Transverse colon (tissue), 4 donors: ENCODE measurements at regions of chr14 and their contacts with region 1.

Region 1: DNA sequence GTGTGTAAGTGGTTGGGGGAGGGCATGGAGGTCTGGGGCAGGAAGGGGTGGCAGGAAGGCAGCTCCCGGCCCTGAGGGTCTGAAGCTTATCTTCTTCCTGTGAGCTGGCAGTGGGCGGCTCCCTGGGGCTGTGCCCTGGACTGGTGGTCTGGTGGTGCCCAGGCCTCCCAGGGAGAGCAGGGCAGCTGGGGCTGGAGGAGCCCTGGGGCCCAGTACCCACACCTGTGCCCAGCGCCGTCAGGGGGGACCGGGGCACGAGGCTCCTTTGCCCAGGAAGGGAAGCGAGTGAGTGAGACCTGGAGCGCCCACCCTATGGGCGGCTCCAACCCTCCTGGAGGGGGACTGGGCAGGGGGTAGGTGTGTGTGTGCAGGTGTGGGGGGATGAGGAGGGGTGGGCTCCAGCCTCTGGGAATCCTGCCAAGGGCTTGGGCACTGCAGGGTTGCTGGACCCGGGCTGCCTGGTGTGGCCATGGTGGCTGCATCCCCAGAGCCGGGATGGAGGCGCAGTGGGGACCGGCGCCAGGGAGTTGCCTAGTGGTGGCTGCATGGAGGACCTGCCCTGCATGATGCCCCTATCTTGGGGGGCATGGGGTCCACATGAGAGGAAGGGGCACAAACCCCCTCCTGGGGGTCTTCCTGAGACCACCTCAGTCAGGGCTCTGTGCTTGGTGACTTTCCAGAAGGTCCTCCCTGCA is 353.6 kb downstream of the TMEM121 start:
- DNase-seq: peak; percentile 3
- H3K4me3 ChIP-seq: no peak overlapping the region
- H3K27ac ChIP-seq: no peak overlapping the region
- H3K4me1 ChIP-seq: no peaks in the 10 kb centered on the region
- H3K27me3 ChIP-seq: no peaks in the 10 kb centered on the region
- CTCF ChIP-seq: no peak
- EP300 ChIP-seq: no peak
- POLR2A ChIP-seq: no peak

Region 2: GRCh38 chr14:104882325-104883115 is 997.5 kb before region 1 on chr14:
- in situ Hi-C with region 1: no loop called
- intact Hi-C with region 1: loop called (anchors 10 kb)
- DNase-seq: peak; percentile 83
- H3K4me3 ChIP-seq: no peak overlapping the region
- H3K27ac ChIP-seq: peak overlapping the region in 2 of 4 donors; percentile 34 to 44
- H3K4me1 ChIP-seq: peaks cover 0 to 4% (median 1%) of the 10 kb centered on the region in 4 donors
- H3K27me3 ChIP-seq: no peaks in the 10 kb centered on the region
- CTCF ChIP-seq: no peak
- EP300 ChIP-seq: no peak
- POLR2A ChIP-seq: no peak

Region 3: GRCh38 chr14:106277503-106277902 is 397.5 kb after region 1 on chr14:
- in situ Hi-C with region 1: no loop called
- intact Hi-C with region 1: no loop called
- DNase-seq: peak; percentile 18
- H3K4me3 ChIP-seq: no peak overlapping the region
- H3K27ac ChIP-seq: no peak overlapping the region
- H3K4me1 ChIP-seq: no peaks in the 10 kb centered on the region
- H3K27me3 ChIP-seq: peaks cover 12% of the 10 kb centered on the region
- CTCF ChIP-seq: peak; percentile 17 to 52 (median 33)
- EP300 ChIP-seq: no peak
- POLR2A ChIP-seq: no peak